ENCODE measurements at regions of chr22 and their contacts with region 1.

Region 1: DNA sequence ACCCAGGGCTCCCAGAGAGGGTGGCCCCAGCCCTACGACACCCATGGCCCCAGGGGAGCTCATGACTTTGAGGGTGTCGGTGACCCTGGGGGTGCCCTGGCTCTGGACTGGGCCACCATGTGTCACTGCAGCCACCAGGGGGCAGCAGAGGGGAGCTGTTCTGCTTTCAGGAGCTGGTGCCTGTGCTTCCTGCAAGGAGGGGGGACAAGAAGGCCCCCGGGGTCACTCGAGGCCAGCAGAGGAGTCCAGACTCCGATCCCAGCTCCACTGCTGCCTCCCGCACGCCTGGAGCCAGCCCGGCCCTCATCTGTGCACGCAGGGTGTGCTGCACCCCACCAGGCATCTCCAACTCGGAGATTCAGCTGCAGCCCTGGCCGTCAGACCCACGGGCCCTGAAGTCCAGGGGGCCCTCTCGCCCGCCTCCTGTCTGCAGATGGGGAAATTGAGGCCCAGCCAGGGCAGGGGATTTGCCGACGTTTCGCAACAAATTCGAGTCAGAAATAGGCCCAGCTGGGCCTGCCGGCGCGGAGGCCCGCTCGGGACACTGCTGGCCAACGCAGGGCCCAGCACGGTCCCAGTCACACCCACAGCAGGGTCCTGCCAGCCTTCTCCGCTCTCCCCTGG is 29.5 kb upstream of the WNT7B start:
- DNase-seq: peak; percentile 60
- ATAC-seq: peak; percentile 74
- H3K4me3 ChIP-seq: peak overlapping the region; percentile 46 to 63
- H3K27ac ChIP-seq: peak overlapping the region; percentile 98
- H3K4me1 ChIP-seq: peaks cover 25 to 46% of the 10 kb centered on the region in 2 experiments
- H3K27me3 ChIP-seq: no peaks in the 10 kb centered on the region
- CTCF ChIP-seq: peak in 2 of 3 experiments; percentile 82 to 94; a peak in 4 of 6 replicates
- POLR2A ChIP-seq: no peak
- RAD21 ChIP-seq: no peak

Region 2: DNA sequence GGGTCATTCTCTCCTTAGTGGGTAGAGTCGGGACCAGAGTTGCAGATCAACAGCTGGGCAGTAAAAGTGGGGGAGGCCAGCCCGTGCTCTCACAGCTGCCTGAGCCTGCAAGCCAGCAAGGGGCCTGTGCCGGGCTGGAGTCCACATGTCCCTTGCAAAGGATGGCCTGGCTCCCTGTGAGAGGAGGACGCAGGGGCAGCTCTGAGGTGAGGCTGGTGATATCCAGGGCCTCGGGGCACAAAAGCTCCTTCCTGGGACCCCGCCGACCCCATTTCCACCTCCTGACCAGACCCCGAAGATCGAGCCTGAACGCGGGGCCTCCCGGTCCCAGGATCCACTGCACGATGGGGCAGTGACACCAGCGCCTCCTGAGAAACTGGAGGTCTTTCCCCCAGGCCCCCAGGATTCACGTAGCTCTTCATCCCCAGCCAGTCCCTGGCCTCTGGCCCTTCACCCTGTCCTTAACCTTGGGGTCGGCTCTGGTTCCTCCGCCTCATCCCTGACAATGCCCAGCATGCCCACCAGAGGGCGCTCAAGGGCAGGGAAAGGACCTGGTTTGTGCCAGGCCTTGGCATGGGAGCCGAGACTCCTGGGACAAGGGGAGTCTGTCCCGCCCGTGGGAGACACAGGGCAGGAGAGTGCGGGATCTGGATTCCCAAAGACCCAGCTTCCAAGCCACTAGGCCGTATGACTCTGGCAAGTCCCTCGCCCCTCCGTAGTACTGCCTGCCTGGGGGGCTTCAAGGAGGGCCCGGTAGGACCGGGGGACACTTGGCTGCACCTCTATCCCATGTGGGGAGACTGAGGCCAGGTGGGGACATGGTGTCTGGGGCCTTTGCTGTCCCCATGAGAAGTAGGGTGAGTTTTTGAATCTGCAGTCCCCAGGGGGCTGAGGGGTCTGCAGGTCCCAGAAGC is 11.7 kb before region 1 on chr22:
- CTCF ChIA-PET with region 1: interaction called, 32 read pairs
- POLR2A ChIA-PET with region 1: interaction called, 3 read pairs
- RAD21 ChIA-PET with region 1: no interaction called
- intact Hi-C with region 1: no loop called
- DNase-seq: no peak
- ATAC-seq: peak; percentile 94
- H3K4me3 ChIP-seq: no peak overlapping the region
- H3K27ac ChIP-seq: no peak overlapping the region
- H3K4me1 ChIP-seq: no peaks in the 10 kb centered on the region
- H3K27me3 ChIP-seq: no peaks in the 10 kb centered on the region
- CTCF ChIP-seq: peak; percentile 93 to 98 (median 95)
- POLR2A ChIP-seq: no peak
- RAD21 ChIP-seq: peak; percentile 97

Region 3: GRCh38 chr22:46035742-46036557 is 29.5 kb after region 1 on chr22:
- CTCF ChIA-PET with region 1: interaction called, 48 read pairs
- POLR2A ChIA-PET with region 1: interaction called, 15 read pairs
- RAD21 ChIA-PET with region 1: interaction called, 17 to 21 read pairs
- intact Hi-C with region 1: loop called (anchors 1 kb)
- DNase-seq: peak; percentile 96
- ATAC-seq: peak; percentile 93
- H3K4me3 ChIP-seq: peak overlapping the region; percentile 93 to 98
- H3K27ac ChIP-seq: peak overlapping the region; percentile 73
- H3K4me1 ChIP-seq: peaks cover 8 to 21% of the 10 kb centered on the region in 2 experiments; a peak in 3 of 4 replicates
- H3K27me3 ChIP-seq: no peaks in the 10 kb centered on the region
- CTCF ChIP-seq: no peak
- POLR2A ChIP-seq: peak; percentile 51
- RAD21 ChIP-seq: no peak

Region 4: DNA sequence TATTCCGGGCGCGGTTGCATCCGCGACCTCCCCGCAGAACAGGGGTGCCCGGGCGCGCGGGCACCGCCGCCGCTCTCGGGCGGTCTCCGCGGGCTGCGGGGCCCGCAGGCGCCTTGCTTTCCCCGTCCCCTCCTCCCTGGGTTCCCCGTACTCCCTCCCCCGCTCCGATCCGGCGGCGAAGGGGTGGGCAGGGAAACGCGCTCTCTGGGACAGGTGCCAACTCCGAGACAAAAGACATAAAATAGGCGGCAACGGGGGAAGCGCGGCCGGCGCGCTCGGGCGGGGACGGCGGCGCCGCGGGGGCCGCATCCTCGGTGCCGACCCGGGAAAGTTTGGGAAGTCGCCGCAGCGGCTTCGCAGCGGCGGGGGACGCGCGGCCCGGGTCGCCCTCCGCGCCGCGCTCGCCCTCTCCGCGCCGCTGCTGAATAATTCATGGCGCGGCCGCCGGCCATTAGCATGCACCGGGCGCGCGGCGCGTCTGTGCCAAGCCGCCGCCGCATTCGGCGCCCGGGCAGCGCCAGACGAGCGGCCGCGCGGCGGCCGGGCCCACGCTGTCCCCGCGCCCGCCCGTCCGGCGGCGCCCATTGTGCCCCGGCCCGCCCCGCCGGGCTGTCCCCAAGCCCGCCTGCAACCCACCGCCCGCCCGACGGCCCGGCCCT is 65.1 kb after region 1 on chr22:
- CTCF ChIA-PET with region 1: interaction called, 13 read pairs
- POLR2A ChIA-PET with region 1: interaction called, 7 read pairs
- RAD21 ChIA-PET with region 1: no interaction called
- intact Hi-C with region 1: loop called (anchors 2 kb)
- DNase-seq: peak; percentile 80
- ATAC-seq: peak; percentile 49
- H3K4me3 ChIP-seq: peak overlapping the region; percentile 86 to 90
- H3K27ac ChIP-seq: peak overlapping the region; percentile 100
- H3K4me1 ChIP-seq: peaks cover 35 to 64% of the 10 kb centered on the region in 2 experiments
- H3K27me3 ChIP-seq: no peaks in the 10 kb centered on the region
- CTCF ChIP-seq: no peak
- POLR2A ChIP-seq: peak; percentile 53
- RAD21 ChIP-seq: no peak

Region 5: DNA sequence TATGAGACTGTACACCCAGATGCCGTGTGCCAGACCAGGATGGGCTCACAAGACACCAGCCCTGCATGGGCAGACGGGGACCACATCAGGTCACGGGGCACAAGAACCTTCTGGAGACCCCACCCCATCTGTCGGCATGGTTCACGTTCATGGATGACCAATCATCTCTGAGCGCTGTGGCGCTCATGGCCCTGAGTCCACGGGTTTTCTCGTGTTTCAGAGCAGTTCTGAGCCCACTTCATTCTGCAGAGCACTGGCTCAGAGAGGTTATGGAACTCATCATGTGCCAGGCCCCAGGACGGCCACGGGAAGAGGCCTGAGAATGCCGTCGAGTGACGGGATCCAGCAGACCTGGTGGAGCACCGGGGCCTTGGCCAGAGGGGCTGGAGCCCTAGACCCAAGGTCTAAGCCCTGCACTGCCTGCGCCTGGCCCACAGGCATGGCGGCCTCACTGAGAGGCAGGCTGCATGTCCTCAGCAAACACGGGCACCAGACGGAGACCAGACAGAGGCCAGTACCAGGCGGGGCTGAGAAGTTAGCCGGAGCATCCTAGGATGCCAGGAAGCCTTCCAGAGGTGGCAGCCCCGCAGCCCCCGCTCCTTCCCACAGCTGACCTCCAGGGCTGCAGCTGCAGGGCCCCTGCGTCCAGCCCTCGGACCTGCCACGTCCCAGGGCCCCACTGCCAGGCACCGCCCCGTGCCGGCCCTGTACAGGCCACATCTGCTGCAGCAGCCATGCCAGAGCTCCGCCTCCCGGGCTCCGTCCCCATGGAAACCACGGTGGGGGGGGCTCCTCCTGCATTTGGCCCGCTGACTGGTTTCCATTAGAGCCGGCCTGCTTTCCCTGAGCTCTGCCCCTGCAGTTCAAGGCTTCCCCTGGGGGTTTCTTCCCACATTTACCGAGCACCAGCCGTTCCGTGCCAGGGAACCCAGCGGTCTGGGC is 81.1 kb after region 1 on chr22:
- CTCF ChIA-PET with region 1: interaction called, 17 read pairs
- POLR2A ChIA-PET with region 1: interaction called, 3 read pairs
- RAD21 ChIA-PET with region 1: no interaction called
- intact Hi-C with region 1: no loop called
- DNase-seq: no peak
- ATAC-seq: no peak
- H3K4me3 ChIP-seq: no peak overlapping the region
- H3K27ac ChIP-seq: peak overlapping the region; percentile 100
- H3K4me1 ChIP-seq: peaks cover 36 to 60% of the 10 kb centered on the region in 2 experiments
- H3K27me3 ChIP-seq: no peaks in the 10 kb centered on the region
- CTCF ChIP-seq: no peak
- POLR2A ChIP-seq: no peak
- RAD21 ChIP-seq: no peak

Region 6: DNA sequence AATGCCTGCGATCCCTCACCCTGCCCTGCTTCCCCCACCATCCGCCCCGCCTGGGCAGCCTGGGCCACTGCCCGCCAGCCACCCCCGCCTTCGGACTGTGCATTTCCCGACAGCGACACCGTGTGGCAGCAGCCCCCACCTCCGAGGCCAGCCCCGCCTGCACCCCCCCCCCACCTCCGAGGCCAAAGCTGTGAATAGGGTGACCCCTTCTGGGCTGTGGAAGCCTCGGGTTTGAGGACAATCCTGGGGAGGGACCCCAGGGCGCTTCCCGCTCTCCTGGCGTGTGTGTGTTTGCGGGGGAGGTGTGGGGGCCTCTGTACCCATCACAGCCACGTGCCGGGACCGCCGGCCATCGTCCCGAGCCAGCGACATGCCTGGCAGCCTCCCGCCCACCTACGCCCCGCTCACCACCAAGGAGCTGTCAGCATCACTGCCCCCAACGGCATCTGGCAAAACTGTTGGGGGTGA is 110.0 kb after region 1 on chr22:
- CTCF ChIA-PET with region 1: interaction called, 151 read pairs
- POLR2A ChIA-PET with region 1: interaction called, 9 read pairs
- RAD21 ChIA-PET with region 1: interaction called, 16 to 27 read pairs
- intact Hi-C with region 1: loop called (anchors 1 kb)
- DNase-seq: peak; percentile 66
- ATAC-seq: peak; percentile 84
- H3K4me3 ChIP-seq: no peak overlapping the region
- H3K27ac ChIP-seq: peak overlapping the region; percentile 45; the same call in 1 of the 2 replicates
- H3K4me1 ChIP-seq: peaks cover 4 to 23% of the 10 kb centered on the region in 2 experiments; a peak in 3 of 4 replicates
- H3K27me3 ChIP-seq: no peaks in the 10 kb centered on the region
- CTCF ChIP-seq: peak; percentile 88 to 99 (median 94)
- POLR2A ChIP-seq: no peak
- RAD21 ChIP-seq: peak; percentile 98